AG04450 (cell line): ENCODE measurements at regions of chr6 and their contacts with region 1.

Region 1: DNA sequence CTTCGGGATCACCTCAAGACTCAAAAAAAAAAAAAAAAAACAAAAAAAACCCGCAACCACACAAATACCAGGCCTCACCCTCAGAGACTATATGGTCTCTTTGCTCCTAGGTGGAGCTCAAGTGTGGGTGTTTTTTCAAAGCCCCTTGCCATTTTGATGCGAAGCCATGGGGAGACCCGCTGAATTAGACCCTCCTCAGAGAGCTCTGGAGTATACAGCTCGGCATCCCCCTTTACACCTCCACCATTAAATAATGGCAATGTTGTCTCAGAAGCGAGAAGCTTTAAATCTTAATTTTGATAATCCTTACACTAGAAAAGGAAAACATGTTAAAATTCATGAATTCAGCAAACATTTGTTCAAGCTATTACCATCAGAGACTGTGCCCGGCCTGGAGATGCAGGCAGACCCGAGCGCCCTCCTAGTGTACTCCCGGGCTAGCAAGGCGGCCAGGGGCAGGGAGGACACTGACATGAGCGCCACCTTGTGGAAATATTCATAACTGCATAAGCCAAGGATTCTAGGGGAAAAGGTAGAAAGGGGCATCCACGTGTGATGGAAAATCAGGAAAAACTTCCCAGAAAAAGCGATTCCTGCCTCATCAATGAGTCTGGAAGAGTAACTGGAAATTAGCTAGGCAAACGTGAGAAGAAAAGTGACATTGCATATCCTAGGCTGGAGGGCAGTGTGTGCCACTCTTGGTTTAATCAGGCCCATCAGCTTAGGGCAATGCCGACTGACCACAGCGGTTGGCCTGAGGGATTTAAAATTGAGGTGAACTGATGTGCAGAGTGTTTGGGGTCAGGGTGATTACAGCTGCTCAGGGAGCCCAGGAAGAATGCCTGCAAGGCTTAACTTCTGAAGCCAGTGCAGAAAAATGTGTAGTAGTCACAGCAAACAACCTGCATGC is 72.5 kb downstream of the B3GAT2 start:
- DNase-seq: peak; percentile 1
- H3K4me3 ChIP-seq: no peak overlapping the region
- H3K27ac ChIP-seq: no peak overlapping the region
- H3K27me3 ChIP-seq: peaks cover 6% of the 10 kb centered on the region
- CTCF ChIP-seq: peak; percentile 91

Region 2: GRCh38 chr6:70686548-70687133 is 197.7 kb before region 1 on chr6:
- CTCF ChIA-PET with region 1: interaction called, 13 read pairs
- POLR2A ChIA-PET with region 1: no interaction called
- DNase-seq: no peak
- H3K4me3 ChIP-seq: no peak overlapping the region
- H3K27ac ChIP-seq: no peak overlapping the region
- H3K27me3 ChIP-seq: no peaks in the 10 kb centered on the region
- CTCF ChIP-seq: peak; percentile 64

Region 3: DNA sequence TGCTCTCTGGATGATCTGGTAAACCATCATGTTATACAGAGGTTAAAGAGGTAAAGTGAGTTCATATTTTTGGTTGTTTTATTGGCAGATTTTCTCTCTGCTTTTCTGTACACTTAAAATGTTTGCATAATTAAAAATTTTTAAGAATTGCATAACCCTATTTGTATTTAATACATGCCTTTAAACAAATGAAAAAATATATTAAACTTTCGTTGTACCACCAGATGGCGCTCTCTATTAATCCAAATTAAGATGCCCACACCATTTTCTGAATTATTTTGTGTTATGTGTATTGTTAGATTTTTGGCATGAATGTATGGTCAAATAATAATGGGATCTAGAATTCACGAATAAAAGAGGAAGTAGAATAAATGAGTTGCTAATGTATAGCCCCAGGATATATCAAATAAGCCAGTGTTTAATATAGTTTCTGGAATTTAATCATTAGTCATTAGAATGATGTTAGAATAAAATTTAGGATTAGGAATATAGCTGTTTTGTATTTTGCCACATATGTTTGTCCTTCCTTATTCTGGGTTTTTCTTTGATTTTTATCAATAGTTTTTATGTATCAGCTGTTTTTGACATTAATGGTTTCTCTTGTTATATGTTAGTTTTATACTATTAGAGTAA is 177.7 kb before region 1 on chr6:
- CTCF ChIA-PET with region 1: interaction called, 270 read pairs
- POLR2A ChIA-PET with region 1: no interaction called
- DNase-seq: peak; percentile 16
- H3K4me3 ChIP-seq: no peak overlapping the region
- H3K27ac ChIP-seq: no peak overlapping the region
- H3K27me3 ChIP-seq: no peaks in the 10 kb centered on the region
- CTCF ChIP-seq: peak; percentile 51

Region 4: GRCh38 chr6:70821751-70822150 is 62.6 kb before region 1 on chr6:
- CTCF ChIA-PET with region 1: interaction called, 10 read pairs
- POLR2A ChIA-PET with region 1: no interaction called
- DNase-seq: no peak
- H3K4me3 ChIP-seq: no peak overlapping the region
- H3K27ac ChIP-seq: no peak overlapping the region
- H3K27me3 ChIP-seq: no peaks in the 10 kb centered on the region
- CTCF ChIP-seq: no peak

Region 5: DNA sequence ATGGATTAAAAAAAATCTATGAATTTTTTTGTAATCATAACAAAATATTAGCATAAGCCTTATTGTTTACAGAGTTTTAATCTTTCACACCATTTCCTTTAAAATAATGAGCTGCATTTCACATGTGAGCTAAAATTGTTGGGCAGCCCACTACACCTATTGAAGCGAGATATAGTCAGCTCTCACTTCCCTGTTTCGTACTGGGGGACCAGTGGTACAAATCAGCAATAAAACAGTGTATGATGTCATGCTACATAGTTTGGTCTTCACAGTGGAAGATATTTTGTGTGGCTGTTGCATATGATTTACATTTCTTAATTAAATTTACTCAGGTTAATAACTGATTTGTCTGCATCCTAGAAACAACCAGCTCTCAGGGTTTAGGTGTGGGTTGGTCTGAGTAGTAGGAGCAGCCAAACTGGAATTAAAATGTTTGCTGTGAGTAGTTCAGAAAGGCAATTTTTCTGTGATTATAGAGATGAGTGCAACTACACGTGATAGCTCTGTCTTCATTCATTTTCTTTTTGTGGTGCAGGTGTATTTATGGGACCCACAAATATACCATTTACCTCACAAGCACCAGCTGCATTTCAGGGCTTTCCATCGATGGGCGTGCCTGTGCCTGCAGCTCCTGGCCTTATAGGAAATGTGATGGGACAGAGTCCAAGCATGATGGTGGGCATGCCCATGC is 26.8 kb before region 1 on chr6:
- CTCF ChIA-PET with region 1: interaction called, 26 read pairs
- POLR2A ChIA-PET with region 1: no interaction called
- DNase-seq: no peak
- H3K4me3 ChIP-seq: no peak overlapping the region
- H3K27ac ChIP-seq: no peak overlapping the region
- H3K27me3 ChIP-seq: no peaks in the 10 kb centered on the region
- CTCF ChIP-seq: no peak

Region 6: DNA sequence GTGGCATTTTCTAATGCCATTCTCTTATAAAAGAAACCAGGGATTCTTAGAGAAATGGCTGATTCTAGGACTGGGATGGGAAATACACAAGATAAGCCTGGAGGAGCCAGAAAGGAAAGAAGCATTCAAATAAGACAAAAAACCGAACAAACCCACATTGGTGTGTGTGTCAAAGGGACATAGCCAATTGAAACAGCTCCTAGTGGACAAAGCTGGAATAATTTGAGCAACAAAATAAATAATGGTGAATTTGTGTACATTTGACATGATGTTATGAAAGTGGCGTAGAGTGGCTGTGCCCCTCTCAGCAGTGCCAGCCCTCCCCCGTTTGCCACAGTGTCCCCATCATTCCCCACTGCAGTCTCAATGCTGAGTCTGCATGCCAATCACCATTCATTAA is 17.0 kb after region 1 on chr6:
- CTCF ChIA-PET with region 1: interaction called, 28 read pairs
- POLR2A ChIA-PET with region 1: no interaction called
- DNase-seq: no peak
- H3K4me3 ChIP-seq: no peak overlapping the region
- H3K27ac ChIP-seq: no peak overlapping the region
- H3K27me3 ChIP-seq: no peaks in the 10 kb centered on the region
- CTCF ChIP-seq: peak; percentile 36